ENCODE measurements at regions of chr3 and their contacts with region 1.

Region 1: GRCh38 chr3:113712129-113712528 is 15.7 kb upstream of the USF3 start:
- DNase-seq: no peak
- H3K4me3 ChIP-seq: no peak overlapping the region
- H3K27ac ChIP-seq: no peak overlapping the region
- H3K4me1 ChIP-seq: no peaks in the 10 kb centered on the region
- H3K27me3 ChIP-seq: no peaks in the 10 kb centered on the region
- CTCF ChIP-seq: no peak

Region 2: DNA sequence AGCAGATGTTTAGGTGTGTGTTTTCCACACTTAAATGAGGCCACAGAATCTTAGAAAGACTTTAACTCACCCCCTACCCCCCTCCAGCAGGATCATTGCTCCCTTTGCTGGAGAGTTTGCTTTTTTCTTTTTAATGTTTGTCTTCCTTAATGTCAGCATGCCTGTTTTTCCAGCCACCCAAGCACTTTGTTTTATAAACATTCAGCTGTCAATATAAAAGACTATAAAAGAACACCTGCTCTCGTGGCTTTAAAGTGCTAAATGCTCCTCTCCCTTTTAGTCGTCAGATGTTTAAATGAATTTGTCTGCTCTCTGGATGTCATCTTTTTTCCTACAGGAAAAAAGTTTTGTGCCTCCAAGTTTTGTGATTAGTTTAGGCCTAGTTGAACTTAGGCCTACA is 118.1 kb before region 1 on chr3:
- CTCF ChIA-PET with region 1: no interaction called
- POLR2A ChIA-PET with region 1: interaction called, 10 read pairs
- intact Hi-C with region 1: no loop called
- DNase-seq: no peak
- H3K4me3 ChIP-seq: no peak overlapping the region
- H3K27ac ChIP-seq: no peak overlapping the region
- H3K4me1 ChIP-seq: no peaks in the 10 kb centered on the region
- H3K27me3 ChIP-seq: no peaks in the 10 kb centered on the region
- CTCF ChIP-seq: no peak

Region 3: DNA sequence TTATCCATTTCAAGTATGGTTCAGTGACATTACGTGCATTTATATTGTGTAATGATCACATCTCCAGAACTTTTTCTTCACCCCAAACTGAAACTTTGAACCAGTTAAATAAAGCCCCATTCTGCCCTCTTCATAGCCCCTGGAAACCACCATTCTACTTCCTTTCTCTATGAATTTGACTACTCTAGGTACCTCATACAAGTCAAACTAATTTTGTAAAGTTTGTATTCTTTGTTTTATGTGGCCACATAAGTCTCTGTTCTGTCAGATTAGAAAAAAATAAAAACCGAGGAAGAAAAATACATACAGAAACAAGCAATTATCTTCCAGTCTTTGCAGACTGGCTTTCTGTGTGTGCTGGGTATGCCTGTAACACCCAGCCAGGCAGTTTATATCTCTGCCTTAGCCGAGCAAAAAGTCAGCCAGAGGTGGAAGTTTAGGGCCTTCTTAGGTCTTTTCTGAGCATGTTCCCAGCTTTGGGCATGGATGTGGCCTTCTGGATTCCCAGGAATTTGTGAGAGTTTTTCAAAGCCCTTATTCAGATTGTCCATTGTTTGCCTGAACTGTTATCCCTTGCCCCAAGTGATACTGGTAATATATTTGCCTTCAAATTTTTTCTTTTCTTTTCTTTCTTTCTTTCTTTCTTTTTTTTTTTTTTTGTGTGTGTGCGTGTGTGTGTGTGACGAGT is 120.5 kb after region 1 on chr3:
- CTCF ChIA-PET with region 1: no interaction called
- POLR2A ChIA-PET with region 1: no interaction called
- intact Hi-C with region 1: no loop called
- DNase-seq: no peak
- H3K4me3 ChIP-seq: no peak overlapping the region
- H3K27ac ChIP-seq: no peak overlapping the region
- H3K4me1 ChIP-seq: peaks cover 34% of the 10 kb centered on the region
- H3K27me3 ChIP-seq: no peaks in the 10 kb centered on the region
- CTCF ChIP-seq: no peak

Region 4: DNA sequence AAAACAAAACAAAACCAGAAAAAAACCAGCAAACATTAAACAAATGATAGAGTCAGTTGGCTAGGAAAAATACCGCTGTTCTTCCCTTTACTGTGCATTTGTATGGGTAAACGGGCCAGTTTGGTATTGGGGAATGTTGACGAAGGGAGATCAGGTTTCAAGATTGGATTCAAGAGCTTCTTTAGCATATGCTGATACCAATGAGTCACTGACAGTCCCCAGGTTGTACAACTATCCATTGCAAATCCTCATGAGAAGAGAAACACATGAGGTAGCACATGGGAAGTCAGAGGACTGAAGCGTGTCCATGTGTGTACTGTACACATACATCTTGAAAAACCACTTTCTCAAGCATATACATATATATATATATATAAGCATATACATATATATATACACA is 607.3 kb after region 1 on chr3:
- CTCF ChIA-PET with region 1: no interaction called
- POLR2A ChIA-PET with region 1: interaction called, 22 read pairs
- intact Hi-C with region 1: no loop called
- DNase-seq: peak; percentile 46 to 90
- H3K4me3 ChIP-seq: no peak overlapping the region
- H3K27ac ChIP-seq: peak overlapping the region; percentile 65
- H3K4me1 ChIP-seq: peaks cover 25% of the 10 kb centered on the region
- H3K27me3 ChIP-seq: no peaks in the 10 kb centered on the region
- CTCF ChIP-seq: no peak

Measured in PC-9 (cell line).